ENCODE measurements at regions of chr16 and their contacts with region 1.

Region 1: GRCh38 chr16:69930117-69930776 is 20.9 kb upstream of the CLEC18A start:
- DNase-seq: peak; percentile 72
- H3K4me3 Mint-ChIP-seq: no peak overlapping the region
- H3K27ac Mint-ChIP-seq: no peak overlapping the region
- H3K4me1 Mint-ChIP-seq: no peaks in the 10 kb centered on the region
- H3K27me3 Mint-ChIP-seq: no peaks in the 10 kb centered on the region
- CTCF ChIP-seq: peak; percentile 59

Region 2: GRCh38 chr16:69651217-69651616 is 279.0 kb before region 1 on chr16:
- CTCF ChIA-PET with region 1: no interaction called
- POLR2A ChIA-PET with region 1: no interaction called
- intact Hi-C with region 1: no loop called
- DNase-seq: no peak
- H3K4me3 Mint-ChIP-seq: no peak overlapping the region
- H3K27ac Mint-ChIP-seq: peak overlapping the region; percentile 68
- H3K4me1 Mint-ChIP-seq: peaks cover 8% of the 10 kb centered on the region
- H3K27me3 Mint-ChIP-seq: no peaks in the 10 kb centered on the region
- CTCF ChIP-seq: no peak

Region 3: GRCh38 chr16:69796351-69797118 is 133.7 kb before region 1 on chr16:
- CTCF ChIA-PET with region 1: interaction called, 66 read pairs
- POLR2A ChIA-PET with region 1: no interaction called
- intact Hi-C with region 1: loop called (anchors 1 kb)
- DNase-seq: peak; percentile 75
- H3K4me3 Mint-ChIP-seq: no peak overlapping the region
- H3K27ac Mint-ChIP-seq: no peak overlapping the region
- H3K4me1 Mint-ChIP-seq: peaks cover 6% of the 10 kb centered on the region
- H3K27me3 Mint-ChIP-seq: no peaks in the 10 kb centered on the region
- CTCF ChIP-seq: peak; percentile 70

Region 4: DNA sequence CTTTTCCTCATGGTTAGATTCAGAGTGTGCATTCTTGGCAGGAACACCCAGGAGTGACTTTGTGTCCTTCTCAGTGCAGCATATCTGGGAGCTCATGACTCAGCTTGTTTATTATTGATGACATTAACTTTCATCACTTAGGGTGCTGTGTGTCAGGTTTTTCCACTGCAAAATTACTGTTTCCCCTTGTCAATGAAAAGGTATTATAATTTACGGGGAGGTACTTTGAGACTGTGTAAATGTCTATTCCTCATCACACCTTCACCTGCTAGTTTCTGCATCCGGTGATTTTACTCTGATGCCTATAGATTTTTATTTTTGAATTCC is 117.6 kb before region 1 on chr16:
- CTCF ChIA-PET with region 1: interaction called, 10 read pairs
- POLR2A ChIA-PET with region 1: no interaction called
- intact Hi-C with region 1: no loop called
- DNase-seq: no peak
- H3K4me3 Mint-ChIP-seq: no peak overlapping the region
- H3K27ac Mint-ChIP-seq: no peak overlapping the region
- H3K4me1 Mint-ChIP-seq: no peaks in the 10 kb centered on the region
- H3K27me3 Mint-ChIP-seq: no peaks in the 10 kb centered on the region
- CTCF ChIP-seq: no peak

Region 5: DNA sequence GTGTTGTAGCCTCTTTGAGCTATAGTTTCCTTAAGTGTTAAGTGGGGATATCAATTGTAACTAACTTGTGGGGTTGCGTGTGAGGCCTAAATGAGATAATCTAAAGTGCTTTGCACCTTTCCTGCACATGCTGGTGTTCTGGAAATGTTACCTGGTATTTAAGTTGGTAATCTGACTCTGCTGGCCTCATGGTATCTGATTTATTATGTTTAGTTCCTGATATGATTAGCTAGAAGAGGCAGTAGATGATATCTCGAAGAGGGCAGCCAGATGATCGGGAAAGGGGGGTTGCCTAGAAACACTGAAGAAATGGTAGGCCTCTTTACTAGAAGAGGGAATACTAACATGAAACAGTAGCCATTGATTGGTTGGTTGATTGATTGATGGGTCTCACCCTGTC is 44.5 kb before region 1 on chr16:
- CTCF ChIA-PET with region 1: interaction called, 11 read pairs
- POLR2A ChIA-PET with region 1: no interaction called
- intact Hi-C with region 1: no loop called
- DNase-seq: no peak
- H3K4me3 Mint-ChIP-seq: no peak overlapping the region
- H3K27ac Mint-ChIP-seq: no peak overlapping the region
- H3K4me1 Mint-ChIP-seq: no peaks in the 10 kb centered on the region
- H3K27me3 Mint-ChIP-seq: no peaks in the 10 kb centered on the region
- CTCF ChIP-seq: no peak

Region 6: GRCh38 chr16:69906838-69907401 is 23.3 kb before region 1 on chr16:
- CTCF ChIA-PET with region 1: interaction called, 10 read pairs
- POLR2A ChIA-PET with region 1: no interaction called
- intact Hi-C with region 1: no loop called
- DNase-seq: no peak
- H3K4me3 Mint-ChIP-seq: no peak overlapping the region
- H3K27ac Mint-ChIP-seq: no peak overlapping the region
- H3K4me1 Mint-ChIP-seq: no peaks in the 10 kb centered on the region
- H3K27me3 Mint-ChIP-seq: no peaks in the 10 kb centered on the region
- CTCF ChIP-seq: no peak

Region 7: GRCh38 chr16:69917739-69918138 is 12.5 kb before region 1 on chr16:
- CTCF ChIA-PET with region 1: interaction called, 14 read pairs
- POLR2A ChIA-PET with region 1: interaction called, 3 read pairs
- intact Hi-C with region 1: no loop called
- DNase-seq: peak; percentile 79
- H3K4me3 Mint-ChIP-seq: no peak overlapping the region
- H3K27ac Mint-ChIP-seq: peak overlapping the region; percentile 90
- H3K4me1 Mint-ChIP-seq: peaks cover 12% of the 10 kb centered on the region
- H3K27me3 Mint-ChIP-seq: no peaks in the 10 kb centered on the region
- CTCF ChIP-seq: no peak

Region 8: GRCh38 chr16:69941251-69942098 is 11.2 kb after region 1 on chr16:
- CTCF ChIA-PET with region 1: interaction called, 29 read pairs
- POLR2A ChIA-PET with region 1: no interaction called
- intact Hi-C with region 1: no loop called
- DNase-seq: no peak
- H3K4me3 Mint-ChIP-seq: no peak overlapping the region
- H3K27ac Mint-ChIP-seq: no peak overlapping the region
- H3K4me1 Mint-ChIP-seq: no peaks in the 10 kb centered on the region
- H3K27me3 Mint-ChIP-seq: no peaks in the 10 kb centered on the region
- CTCF ChIP-seq: no peak

Region 9: GRCh38 chr16:71303938-71304337 is 1373.7 kb after region 1 on chr16:
- CTCF ChIA-PET with region 1: no interaction called
- POLR2A ChIA-PET with region 1: no interaction called
- intact Hi-C with region 1: no loop called
- DNase-seq: peak; percentile 6
- H3K4me3 Mint-ChIP-seq: no peak overlapping the region
- H3K27ac Mint-ChIP-seq: no peak overlapping the region
- H3K4me1 Mint-ChIP-seq: no peaks in the 10 kb centered on the region
- H3K27me3 Mint-ChIP-seq: peaks cover 38% of the 10 kb centered on the region
- CTCF ChIP-seq: no peak

Measured in MCF 10A (cell line).